ENCODE measurements at regions of chr3 and their contacts with region 1.

Region 1: DNA sequence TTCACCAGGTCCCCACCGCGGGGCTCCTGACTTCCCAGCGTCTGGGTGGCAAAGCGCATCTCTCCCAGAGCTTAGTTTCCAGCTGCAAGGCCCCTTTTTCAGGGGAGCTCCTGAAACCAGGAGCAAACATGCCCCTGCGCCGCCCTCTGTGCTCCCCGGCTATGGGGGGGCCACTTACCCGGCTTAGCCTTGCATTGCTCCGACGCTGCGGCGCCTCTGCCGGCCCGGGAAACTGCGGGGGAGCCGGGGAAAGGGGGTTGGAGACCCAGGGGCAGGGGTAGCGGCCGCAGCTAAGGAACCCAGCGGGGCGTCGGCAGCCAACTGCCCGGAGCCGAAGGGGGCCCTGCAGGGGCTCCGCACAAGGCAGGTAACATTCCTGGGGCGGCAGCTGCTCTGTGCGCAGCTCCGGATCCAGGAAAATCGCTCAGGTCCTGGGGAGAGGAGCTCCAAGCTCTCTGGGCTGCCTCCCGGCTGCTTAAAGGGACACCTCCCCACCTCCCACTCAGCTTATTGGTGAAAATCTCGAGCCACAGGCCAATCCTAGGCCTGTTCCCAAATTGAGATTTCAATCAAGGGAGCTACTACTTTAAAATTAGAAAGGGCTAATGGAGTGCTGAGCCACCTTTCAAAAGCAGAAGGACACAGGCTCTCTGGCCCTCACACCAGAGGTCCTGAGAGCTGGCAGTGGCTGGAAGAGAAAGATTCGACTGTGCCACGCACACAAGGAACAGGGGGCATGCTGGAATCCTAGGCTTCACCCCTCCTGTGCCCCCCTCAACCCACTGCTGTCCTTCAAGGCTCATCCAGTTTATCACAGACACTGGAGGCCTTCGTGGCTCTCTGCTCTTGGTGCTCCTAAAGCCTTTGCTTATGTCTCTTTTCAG is 42.7 kb upstream of the PRICKLE2 start:
- DNase-seq: peak; percentile 76
- H3K4me3 ChIP-seq: peak overlapping the region; percentile 68 to 89 (median 84)
- H3K27ac ChIP-seq: peak overlapping the region; percentile 78
- H3K4me1 ChIP-seq: peaks cover 27% of the 10 kb centered on the region
- H3K27me3 ChIP-seq: no peaks in the 10 kb centered on the region
- CTCF ChIP-seq: peak in 1 of 2 donors; percentile 7

Region 2: DNA sequence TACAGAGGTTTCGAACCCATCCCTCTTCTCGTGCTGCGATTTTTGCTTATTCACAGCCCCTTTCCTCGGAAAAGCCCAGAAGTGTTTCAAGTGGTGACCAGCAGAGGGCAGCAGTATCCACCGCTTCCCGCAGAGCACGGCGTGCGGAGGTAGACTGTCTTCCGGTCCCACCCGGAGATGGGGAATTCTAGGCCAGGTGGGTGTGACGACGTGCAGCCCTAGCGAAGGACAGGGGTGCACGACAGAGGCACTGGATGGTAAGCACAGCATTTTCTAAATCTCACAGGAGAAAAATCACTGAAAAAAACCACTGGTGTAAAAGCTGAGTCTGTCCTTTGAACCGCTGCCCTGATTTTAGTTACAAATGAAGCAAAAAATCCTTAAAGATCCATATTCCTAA is 237.2 kb before region 1 on chr3:
- CTCF ChIA-PET with region 1: no interaction called
- dilution Hi-C with region 1: no loop called
- in situ Hi-C with region 1: no loop called
- intact Hi-C with region 1: loop called (anchors 1 kb)
- DNase-seq: peak; percentile 58
- H3K4me3 ChIP-seq: peak overlapping the region in 1 of 3 experiments; percentile 6
- H3K27ac ChIP-seq: peak overlapping the region; percentile 16
- H3K4me1 ChIP-seq: peaks cover 9% of the 10 kb centered on the region
- H3K27me3 ChIP-seq: no peaks in the 10 kb centered on the region
- CTCF ChIP-seq: peak; percentile 64 to 94

Region 3: DNA sequence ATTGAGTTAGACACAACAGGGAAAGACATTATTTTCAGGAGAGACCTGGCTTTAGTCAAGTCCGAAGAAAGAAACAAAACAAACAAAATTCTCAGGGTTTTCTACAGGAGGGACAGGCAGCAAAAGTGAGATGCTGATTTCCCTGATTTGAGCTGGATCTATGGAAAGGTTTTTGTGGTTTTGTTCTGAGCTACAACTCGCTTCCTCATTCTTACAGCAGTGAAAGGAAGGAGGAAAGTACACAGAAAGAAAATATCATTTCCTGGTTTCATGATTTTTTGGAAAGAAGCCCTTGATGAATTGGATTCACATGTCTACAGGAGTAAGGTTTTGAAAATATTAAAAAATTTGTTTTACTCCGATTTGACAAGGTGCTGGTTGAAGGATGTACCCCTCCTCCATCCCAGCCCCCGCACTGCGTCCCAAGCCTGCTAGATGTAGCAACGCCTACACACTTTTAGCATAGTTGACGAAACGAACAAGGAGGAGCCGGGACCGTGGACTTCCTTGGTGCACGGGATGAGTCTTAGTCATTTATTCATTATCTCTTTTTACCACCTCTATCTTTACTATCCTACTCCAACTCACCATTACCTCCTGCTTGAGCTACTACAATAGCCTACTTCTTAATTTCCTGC is 53.5 kb before region 1 on chr3:
- CTCF ChIA-PET with region 1: no interaction called
- dilution Hi-C with region 1: loop called (anchors 5 kb)
- in situ Hi-C with region 1: no loop called
- intact Hi-C with region 1: no loop called
- DNase-seq: peak; percentile 65
- H3K4me3 ChIP-seq: peak overlapping the region; percentile 28 to 46 (median 44)
- H3K27ac ChIP-seq: peak overlapping the region; percentile 83
- H3K4me1 ChIP-seq: peaks cover 55% of the 10 kb centered on the region
- H3K27me3 ChIP-seq: no peaks in the 10 kb centered on the region
- CTCF ChIP-seq: no peak

Region 4: GRCh38 chr3:64232821-64233534 is 35.0 kb before region 1 on chr3:
- CTCF ChIA-PET with region 1: no interaction called
- dilution Hi-C with region 1: no loop called
- in situ Hi-C with region 1: no loop called
- intact Hi-C with region 1: no loop called
- DNase-seq: no peak
- H3K4me3 ChIP-seq: no peak overlapping the region
- H3K27ac ChIP-seq: no peak overlapping the region
- H3K4me1 ChIP-seq: no peaks in the 10 kb centered on the region
- H3K27me3 ChIP-seq: no peaks in the 10 kb centered on the region
- CTCF ChIP-seq: no peak

Region 5: DNA sequence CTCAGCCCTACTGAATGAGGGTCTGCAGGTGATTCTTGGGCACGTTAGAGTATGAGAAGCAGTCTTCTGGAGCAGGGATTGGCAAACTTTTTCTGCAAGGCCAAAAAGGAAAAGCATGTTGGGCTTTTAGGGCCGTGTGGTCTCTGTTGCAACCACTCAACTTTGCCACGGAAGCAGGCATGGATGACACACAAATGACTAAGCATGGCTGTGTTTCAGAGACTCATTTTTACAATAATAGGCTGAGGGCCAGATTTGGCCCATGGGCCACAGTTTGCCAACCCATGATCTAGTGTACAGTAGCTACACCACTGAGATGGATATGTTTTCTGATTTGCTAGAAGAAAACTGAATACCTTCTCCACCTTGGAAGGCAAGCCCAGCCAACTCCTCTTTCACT is 23.4 kb after region 1 on chr3:
- CTCF ChIA-PET with region 1: no interaction called
- dilution Hi-C with region 1: no loop called
- in situ Hi-C with region 1: no loop called
- intact Hi-C with region 1: loop called (anchors 2 kb)
- DNase-seq: peak; percentile 93
- H3K4me3 ChIP-seq: no peak overlapping the region
- H3K27ac ChIP-seq: peak overlapping the region; percentile 81
- H3K4me1 ChIP-seq: peaks cover 33% of the 10 kb centered on the region
- H3K27me3 ChIP-seq: no peaks in the 10 kb centered on the region
- CTCF ChIP-seq: no peak

Region 6: DNA sequence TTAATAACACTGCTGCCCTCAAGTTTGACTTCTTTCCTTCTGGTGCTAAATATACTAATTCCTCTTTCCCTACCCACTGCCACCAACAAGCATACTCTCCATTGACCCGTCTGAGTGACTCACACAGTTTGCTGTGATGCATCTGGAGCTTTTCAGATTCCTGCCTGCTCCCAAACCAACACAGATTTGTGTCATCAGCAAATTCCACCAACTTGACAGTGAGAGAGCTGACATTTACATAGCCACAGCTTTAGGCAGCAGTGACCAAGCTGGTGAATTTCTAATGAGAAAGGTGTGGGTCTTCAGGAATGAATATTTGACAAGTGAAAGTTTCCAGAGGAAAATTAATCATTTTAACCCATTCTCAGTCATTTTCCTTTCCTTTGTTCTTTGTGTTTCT is 53.8 kb after region 1 on chr3:
- CTCF ChIA-PET with region 1: interaction called, 4 read pairs
- dilution Hi-C with region 1: no loop called
- in situ Hi-C with region 1: no loop called
- intact Hi-C with region 1: loop called (anchors 2 kb)
- DNase-seq: peak; percentile 82
- H3K4me3 ChIP-seq: no peak overlapping the region
- H3K27ac ChIP-seq: peak overlapping the region; percentile 43
- H3K4me1 ChIP-seq: peaks cover 35% of the 10 kb centered on the region
- H3K27me3 ChIP-seq: no peaks in the 10 kb centered on the region
- CTCF ChIP-seq: no peak

Region 7: GRCh38 chr3:64351713-64352638 is 84.0 kb after region 1 on chr3:
- CTCF ChIA-PET with region 1: no interaction called
- dilution Hi-C with region 1: no loop called
- in situ Hi-C with region 1: no loop called
- intact Hi-C with region 1: loop called (anchors 1 kb)
- DNase-seq: peak; percentile 97
- H3K4me3 ChIP-seq: peak overlapping the region in 2 of 3 experiments; percentile 18 to 22
- H3K27ac ChIP-seq: peak overlapping the region; percentile 96
- H3K4me1 ChIP-seq: peaks cover 48% of the 10 kb centered on the region
- H3K27me3 ChIP-seq: no peaks in the 10 kb centered on the region
- CTCF ChIP-seq: no peak

Region 8: GRCh38 chr3:64484289-64484992 is 216.5 kb after region 1 on chr3:
- CTCF ChIA-PET with region 1: no interaction called
- dilution Hi-C with region 1: no loop called
- in situ Hi-C with region 1: no loop called
- intact Hi-C with region 1: loop called (anchors 10 kb)
- DNase-seq: peak; percentile 58
- H3K4me3 ChIP-seq: no peak overlapping the region
- H3K27ac ChIP-seq: no peak overlapping the region
- H3K4me1 ChIP-seq: peaks cover 4% of the 10 kb centered on the region
- H3K27me3 ChIP-seq: no peaks in the 10 kb centered on the region
- CTCF ChIP-seq: peak; percentile 73 to 88